ENCODE measurements at regions of chr9 and their contacts with region 1.

Region 1: GRCh38 chr9:128927731-128928411 is 7.1 kb downstream of the PHYHD1 start:
- DNase-seq: peak; percentile 61
- H3K4me3 Mint-ChIP-seq: no peak overlapping the region
- H3K27ac Mint-ChIP-seq: peak overlapping the region; percentile 39
- H3K4me1 Mint-ChIP-seq: peaks cover 7% of the 10 kb centered on the region
- H3K27me3 Mint-ChIP-seq: no peaks in the 10 kb centered on the region
- CTCF ChIP-seq: peak; percentile 73

Region 2: GRCh38 chr9:128847803-128848202 is 80.1 kb before region 1 on chr9:
- CTCF ChIA-PET with region 1: interaction called, 3 read pairs
- intact Hi-C with region 1: loop called (anchors 1 kb)
- DNase-seq: no peak
- H3K4me3 Mint-ChIP-seq: no peak overlapping the region
- H3K27ac Mint-ChIP-seq: no peak overlapping the region
- H3K4me1 Mint-ChIP-seq: no peaks in the 10 kb centered on the region
- H3K27me3 Mint-ChIP-seq: no peaks in the 10 kb centered on the region
- CTCF ChIP-seq: no peak

Region 3: DNA sequence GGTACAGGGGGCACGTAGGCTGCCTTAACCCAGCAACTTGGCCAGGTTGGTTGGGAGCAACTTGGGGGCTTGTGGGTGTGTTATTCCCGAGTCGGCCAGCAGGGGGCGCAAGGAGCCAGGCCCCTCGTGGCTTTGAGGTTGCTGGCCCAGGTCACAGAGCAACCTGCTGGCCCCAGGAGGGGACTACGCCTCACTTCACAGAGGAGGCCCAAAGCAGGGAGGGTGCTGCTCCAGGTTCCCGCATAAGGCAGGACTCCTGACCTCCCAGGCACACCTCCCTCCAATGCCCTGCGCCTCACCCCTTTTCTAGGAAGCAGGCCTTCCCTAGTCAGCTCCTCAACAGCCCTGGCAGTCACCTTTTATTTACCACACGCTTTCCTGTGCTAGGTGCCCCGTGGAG is 64.2 kb before region 1 on chr9:
- CTCF ChIA-PET with region 1: interaction called, 4 read pairs
- intact Hi-C with region 1: loop called (anchors 1 kb)
- DNase-seq: peak; percentile 77
- H3K4me3 Mint-ChIP-seq: no peak overlapping the region
- H3K27ac Mint-ChIP-seq: no peak overlapping the region
- H3K4me1 Mint-ChIP-seq: no peaks in the 10 kb centered on the region
- H3K27me3 Mint-ChIP-seq: no peaks in the 10 kb centered on the region
- CTCF ChIP-seq: peak; percentile 95

Region 4: GRCh38 chr9:128881901-128882681 is 45.8 kb before region 1 on chr9 and contains the starts of genes KYAT1 and LRRC8A:
- CTCF ChIA-PET with region 1: no interaction called
- intact Hi-C with region 1: loop called (anchors 5 kb)
- DNase-seq: peak; percentile 94
- H3K4me3 Mint-ChIP-seq: peak within 1 kb of the TSS; percentile 85
- H3K27ac Mint-ChIP-seq: peak within 1 kb of the TSS; percentile 90
- H3K4me1 Mint-ChIP-seq: no peaks in the 10 kb centered on the region
- H3K27me3 Mint-ChIP-seq: no peaks in the 10 kb centered on the region
- CTCF ChIP-seq: no peak
- total RNA-seq, gene KYAT1: 3.7 and 4.1 TPM in 2 replicates
- total RNA-seq, gene LRRC8A: 28.7 and 29.9 TPM in 2 replicates

Region 5: GRCh38 chr9:129028192-129028957 is 100.5 kb after region 1 on chr9 and contains the start of gene SH3GLB2:
- CTCF ChIA-PET with region 1: no interaction called
- intact Hi-C with region 1: no loop called
- DNase-seq: peak; percentile 93
- H3K4me3 Mint-ChIP-seq: peak within 1 kb of the TSS; percentile 83
- H3K27ac Mint-ChIP-seq: peak within 1 kb of the TSS; percentile 58
- H3K4me1 Mint-ChIP-seq: no peaks in the 10 kb centered on the region
- H3K27me3 Mint-ChIP-seq: no peaks in the 10 kb centered on the region
- CTCF ChIP-seq: peak; percentile 51
- total RNA-seq, gene SH3GLB2: 66.5 and 83.8 TPM in 2 replicates